Activated CD4-positive, alpha-beta T cell treated with anti-CD3 and anti-CD28 coated beads for 36 hours (primary cell): ENCODE measurements at regions of chrX and their contacts with region 1.

Region 1: GRCh38 chrX:137194164-137194563 is 160.4 kb upstream of the GPR101 start:
- DNase-seq: peak; percentile 55
- ATAC-seq: peak; percentile 64
- H3K4me3 Mint-ChIP-seq: no peak overlapping the region
- H3K27ac Mint-ChIP-seq: no peak overlapping the region
- H3K4me1 Mint-ChIP-seq: peaks cover 7% of the 10 kb centered on the region
- H3K27me3 Mint-ChIP-seq: peaks cover 2% of the 10 kb centered on the region

Region 2: GRCh38 chrX:136953867-136954787 is 240.0 kb before region 1 on chrX:
- CTCF ChIA-PET with region 1: interaction called, 4 read pairs
- POLR2A ChIA-PET with region 1: no interaction called
- intact Hi-C with region 1: loop called (anchors 1 kb)
- DNase-seq: peak; percentile 78
- ATAC-seq: peak; percentile 76
- H3K4me3 Mint-ChIP-seq: no peak overlapping the region
- H3K27ac Mint-ChIP-seq: no peak overlapping the region
- H3K4me1 Mint-ChIP-seq: no peaks in the 10 kb centered on the region
- H3K27me3 Mint-ChIP-seq: no peaks in the 10 kb centered on the region

Region 3: GRCh38 chrX:137031039-137031438 is 163.1 kb before region 1 on chrX:
- CTCF ChIA-PET with region 1: no interaction called
- POLR2A ChIA-PET with region 1: no interaction called
- intact Hi-C with region 1: no loop called
- DNase-seq: no peak
- ATAC-seq: no peak
- H3K4me3 Mint-ChIP-seq: no peak overlapping the region
- H3K27ac Mint-ChIP-seq: no peak overlapping the region
- H3K4me1 Mint-ChIP-seq: peaks cover 7% of the 10 kb centered on the region
- H3K27me3 Mint-ChIP-seq: peaks cover 40% of the 10 kb centered on the region

Region 4: DNA sequence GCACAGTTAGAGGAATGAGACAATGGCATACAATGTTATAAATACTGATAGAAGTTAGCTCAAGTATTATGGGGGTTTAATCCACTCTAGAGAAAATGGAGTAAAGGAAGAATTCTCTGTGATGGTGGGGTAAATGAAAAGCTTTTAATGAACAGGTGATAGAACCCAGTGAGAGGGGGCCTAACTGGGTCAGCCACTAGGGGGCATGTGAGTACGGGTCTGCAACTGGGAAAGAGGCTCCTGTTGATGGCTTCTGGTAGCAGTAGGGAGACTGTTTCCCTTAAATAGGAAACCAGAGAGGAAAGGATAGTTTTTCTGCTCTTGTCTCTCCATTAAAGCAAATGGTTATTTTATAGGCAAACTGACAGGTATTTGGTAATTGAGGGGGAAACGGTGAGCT is 27.6 kb before region 1 on chrX:
- CTCF ChIA-PET with region 1: interaction called, 10 read pairs
- POLR2A ChIA-PET with region 1: no interaction called
- intact Hi-C with region 1: no loop called
- DNase-seq: peak; percentile 43
- ATAC-seq: no peak
- H3K4me3 Mint-ChIP-seq: no peak overlapping the region
- H3K27ac Mint-ChIP-seq: no peak overlapping the region
- H3K4me1 Mint-ChIP-seq: no peaks in the 10 kb centered on the region
- H3K27me3 Mint-ChIP-seq: peaks cover 5% of the 10 kb centered on the region